ENCODE measurements at regions of chr18 and their contacts with region 1.

Region 1: GRCh38 chr18:51813740-51814139 is 526.3 kb upstream of the DCC start:
- DNase-seq: no peak
- H3K4me3 ChIP-seq: no peak overlapping the region
- H3K27ac ChIP-seq: no peak overlapping the region
- H3K4me1 ChIP-seq: no peaks in the 10 kb centered on the region
- H3K27me3 ChIP-seq: no peaks in the 10 kb centered on the region
- CTCF ChIP-seq: no peak
- EP300 ChIP-seq: no peak
- POLR2A ChIP-seq: no peak
- RAD21 ChIP-seq: no peak

Region 2: GRCh38 chr18:51789871-51790270 is 23.9 kb before region 1 on chr18:
- CTCF ChIA-PET with region 1: no interaction called
- POLR2A ChIA-PET with region 1: no interaction called
- DNase-seq: no peak
- H3K4me3 ChIP-seq: no peak overlapping the region
- H3K27ac ChIP-seq: no peak overlapping the region
- H3K4me1 ChIP-seq: no peaks in the 10 kb centered on the region
- H3K27me3 ChIP-seq: no peaks in the 10 kb centered on the region
- CTCF ChIP-seq: no peak
- EP300 ChIP-seq: no peak
- POLR2A ChIP-seq: no peak
- RAD21 ChIP-seq: no peak

Region 3: GRCh38 chr18:51802569-51803428 is 10.9 kb before region 1 on chr18:
- CTCF ChIA-PET with region 1: interaction called, 11 read pairs
- POLR2A ChIA-PET with region 1: no interaction called
- DNase-seq: no peak
- H3K4me3 ChIP-seq: no peak overlapping the region
- H3K27ac ChIP-seq: no peak overlapping the region
- H3K4me1 ChIP-seq: no peaks in the 10 kb centered on the region
- H3K27me3 ChIP-seq: no peaks in the 10 kb centered on the region
- CTCF ChIP-seq: no peak
- EP300 ChIP-seq: no peak
- POLR2A ChIP-seq: no peak
- RAD21 ChIP-seq: no peak

Region 4: GRCh38 chr18:51867767-51868166 is 54.0 kb after region 1 on chr18:
- CTCF ChIA-PET with region 1: no interaction called
- POLR2A ChIA-PET with region 1: no interaction called
- DNase-seq: no peak
- H3K4me3 ChIP-seq: no peak overlapping the region
- H3K27ac ChIP-seq: no peak overlapping the region
- H3K4me1 ChIP-seq: no peaks in the 10 kb centered on the region
- H3K27me3 ChIP-seq: no peaks in the 10 kb centered on the region
- CTCF ChIP-seq: no peak
- EP300 ChIP-seq: no peak
- POLR2A ChIP-seq: no peak
- RAD21 ChIP-seq: no peak

Measured in H1 (cell line).